Naive thymus-derived CD4-positive, alpha-beta T cell (primary cell): ENCODE measurements at regions of chr1 and their contacts with region 1.

Region 1: DNA sequence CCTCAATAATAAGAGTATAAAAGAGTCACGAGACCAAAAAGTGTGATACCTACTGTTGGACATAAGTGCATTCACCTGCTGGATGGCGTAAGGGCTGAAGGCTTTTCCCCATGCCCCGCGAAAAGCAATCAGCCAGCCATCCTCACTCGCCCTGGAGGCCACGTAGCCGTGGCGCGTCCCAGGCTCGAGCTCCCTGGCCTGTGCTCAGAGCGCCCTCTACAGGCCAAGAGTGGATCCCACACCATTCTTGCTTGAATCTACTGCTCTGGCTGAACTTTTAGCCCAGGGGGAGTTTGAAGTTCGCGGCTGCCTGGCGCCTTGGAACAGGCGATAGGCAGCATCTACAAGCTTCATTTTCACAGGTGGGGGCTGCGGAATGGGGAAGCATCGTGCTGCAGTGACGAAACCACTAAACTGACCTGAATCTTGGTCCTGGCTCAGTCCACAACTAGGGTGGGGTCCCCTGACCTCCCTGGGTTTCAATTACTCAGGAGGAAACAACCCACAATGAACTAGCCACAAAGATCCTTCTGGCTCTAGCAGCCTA is 70.3 kb upstream of the SERBP1 start:
- DNase-seq: peak; percentile 67 to 89 (median 81)
- ATAC-seq: peak; percentile 100
- H3K4me3 ChIP-seq: no peak overlapping the region
- H3K4me3 Mint-ChIP-seq: peak overlapping the region in 3 of 10 donors; percentile 26 to 56 (median 37)
- H3K27ac ChIP-seq: no peak overlapping the region
- H3K27ac Mint-ChIP-seq: peak overlapping the region in 1 of 9 donors; percentile 35
- H3K4me1 ChIP-seq: no peaks in the 10 kb centered on the region
- H3K4me1 Mint-ChIP-seq: peaks cover 0 to 5% (median 4%) of the 10 kb centered on the region in 7 donors
- H3K27me3 ChIP-seq: no peaks in the 10 kb centered on the region
- H3K27me3 Mint-ChIP-seq: peaks cover 0 to 11% (median 0%) of the 10 kb centered on the region in 5 donors

Region 2: DNA sequence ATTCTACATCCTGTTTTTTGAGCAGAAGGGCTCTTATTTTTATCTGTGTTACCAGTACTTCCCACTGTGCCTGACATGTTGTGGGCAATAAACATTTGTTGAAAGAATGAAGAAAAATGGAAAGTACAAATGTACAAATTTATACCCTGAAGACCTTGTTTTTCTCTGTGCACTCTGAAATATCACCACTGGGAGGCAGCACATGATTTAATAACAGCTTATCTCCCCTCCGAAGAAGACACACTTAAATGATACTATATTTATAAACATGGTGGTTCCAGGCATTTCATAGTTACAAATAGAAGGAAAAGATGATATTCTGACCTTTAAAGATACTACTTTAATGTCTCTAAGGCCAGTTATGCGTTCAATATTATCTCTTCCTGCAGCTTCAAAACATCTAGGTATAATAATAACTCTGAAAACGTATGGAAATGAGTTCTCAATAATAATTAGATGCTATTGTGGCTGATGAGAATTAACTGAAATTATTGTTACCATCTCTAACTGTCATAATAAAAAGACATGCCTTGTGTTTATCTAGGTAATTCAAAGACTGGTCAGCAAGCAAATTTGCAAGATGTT is 735.4 kb before region 1 on chr1:
- CTCF ChIA-PET with region 1: interaction called, 7 read pairs
- POLR2A ChIA-PET with region 1: interaction called, 3 read pairs
- intact Hi-C with region 1: loop called (anchors 1 to 2 kb)
- DNase-seq: peak in 7 of 9 donors; percentile 48 to 68 (median 62)
- ATAC-seq: peak; percentile 81
- H3K4me3 ChIP-seq: no peak overlapping the region
- H3K4me3 Mint-ChIP-seq: no peak overlapping the region
- H3K27ac ChIP-seq: no peak overlapping the region
- H3K27ac Mint-ChIP-seq: no peak overlapping the region
- H3K4me1 ChIP-seq: no peaks in the 10 kb centered on the region
- H3K4me1 Mint-ChIP-seq: peaks cover 7 to 21% (median 15%) of the 10 kb centered on the region in 7 donors
- H3K27me3 ChIP-seq: no peaks in the 10 kb centered on the region
- H3K27me3 Mint-ChIP-seq: peaks cover 0 to 3% (median 0%) of the 10 kb centered on the region in 5 donors

Region 3: GRCh38 chr1:67209521-67209920 is 291.0 kb before region 1 on chr1:
- CTCF ChIA-PET with region 1: interaction called, 57 read pairs
- POLR2A ChIA-PET with region 1: interaction called, 10 read pairs
- intact Hi-C with region 1: loop called (anchors 1 kb)
- DNase-seq: no peak
- ATAC-seq: no peak
- H3K4me3 ChIP-seq: no peak overlapping the region
- H3K4me3 Mint-ChIP-seq: no peak overlapping the region
- H3K27ac ChIP-seq: no peak overlapping the region
- H3K27ac Mint-ChIP-seq: no peak overlapping the region
- H3K4me1 ChIP-seq: peaks cover 0 to 8% of the 10 kb centered on the region in 2 donors
- H3K4me1 Mint-ChIP-seq: peaks cover 11 to 30% (median 21%) of the 10 kb centered on the region in 7 donors
- H3K27me3 ChIP-seq: no peaks in the 10 kb centered on the region
- H3K27me3 Mint-ChIP-seq: no peaks in the 10 kb centered on the region

Region 4: DNA sequence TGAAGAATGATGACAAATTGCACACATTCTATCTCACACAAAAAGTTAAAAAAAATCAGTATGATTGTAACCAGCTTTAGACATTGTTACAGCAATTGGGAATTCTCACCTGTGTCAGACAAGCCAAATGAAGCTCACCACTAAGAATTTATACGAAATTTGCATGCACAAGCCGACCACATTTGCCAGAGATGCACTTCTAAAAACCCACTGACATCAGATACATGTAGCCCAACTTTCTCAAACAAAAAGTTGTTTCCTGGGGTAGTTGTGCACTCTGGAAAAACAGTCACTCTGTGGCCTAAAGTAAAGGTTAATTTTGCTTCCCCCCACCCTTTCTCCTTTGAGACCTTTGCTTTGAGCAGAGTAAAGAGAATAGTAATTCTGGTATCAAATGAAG is 260.7 kb before region 1 on chr1:
- CTCF ChIA-PET with region 1: interaction called, 28 read pairs
- POLR2A ChIA-PET with region 1: no interaction called
- intact Hi-C with region 1: loop called (anchors 1 kb)
- DNase-seq: no peak
- ATAC-seq: no peak
- H3K4me3 ChIP-seq: no peak overlapping the region
- H3K4me3 Mint-ChIP-seq: no peak overlapping the region
- H3K27ac ChIP-seq: no peak overlapping the region
- H3K27ac Mint-ChIP-seq: no peak overlapping the region
- H3K4me1 ChIP-seq: no peaks in the 10 kb centered on the region
- H3K4me1 Mint-ChIP-seq: peaks cover 0 to 11% (median 0%) of the 10 kb centered on the region in 7 donors
- H3K27me3 ChIP-seq: no peaks in the 10 kb centered on the region
- H3K27me3 Mint-ChIP-seq: no peaks in the 10 kb centered on the region

Region 5: GRCh38 chr1:67347688-67348472 is 152.6 kb before region 1 on chr1:
- CTCF ChIA-PET with region 1: interaction called, 13 read pairs
- POLR2A ChIA-PET with region 1: no interaction called
- intact Hi-C with region 1: loop called (anchors 1 kb)
- DNase-seq: no peak
- ATAC-seq: peak; percentile 34
- H3K4me3 ChIP-seq: no peak overlapping the region
- H3K4me3 Mint-ChIP-seq: no peak overlapping the region
- H3K27ac ChIP-seq: no peak overlapping the region
- H3K27ac Mint-ChIP-seq: peak overlapping the region in 1 of 9 donors; percentile 68
- H3K4me1 ChIP-seq: no peaks in the 10 kb centered on the region
- H3K4me1 Mint-ChIP-seq: peaks cover 3 to 36% (median 8%) of the 10 kb centered on the region in 7 donors
- H3K27me3 ChIP-seq: no peaks in the 10 kb centered on the region
- H3K27me3 Mint-ChIP-seq: no peaks in the 10 kb centered on the region

Region 6: GRCh38 chr1:67780637-67781036 is 280.2 kb after region 1 on chr1:
- CTCF ChIA-PET with region 1: no interaction called
- POLR2A ChIA-PET with region 1: no interaction called
- intact Hi-C with region 1: no loop called
- DNase-seq: no peak
- ATAC-seq: no peak
- H3K4me3 ChIP-seq: no peak overlapping the region
- H3K4me3 Mint-ChIP-seq: no peak overlapping the region
- H3K27ac ChIP-seq: no peak overlapping the region
- H3K27ac Mint-ChIP-seq: no peak overlapping the region
- H3K4me1 ChIP-seq: no peaks in the 10 kb centered on the region
- H3K4me1 Mint-ChIP-seq: no peaks in the 10 kb centered on the region
- H3K27me3 ChIP-seq: no peaks in the 10 kb centered on the region
- H3K27me3 Mint-ChIP-seq: peaks cover 0 to 8% (median 7%) of the 10 kb centered on the region in 5 donors